Thyroid gland (tissue), 4 donors: ENCODE measurements at regions of chr6 and their contacts with region 1.

Region 1: GRCh38 chr6:10429638-10430427 is 15.0 kb upstream of the TFAP2A start:
- DNase-seq: no peak
- H3K4me3 ChIP-seq: no peak overlapping the region
- H3K27ac ChIP-seq: no peak overlapping the region
- H3K4me1 ChIP-seq: peaks cover 11 to 16% of the 10 kb centered on the region in 2 donors
- H3K27me3 ChIP-seq: peaks cover 7% of the 10 kb centered on the region
- CTCF ChIP-seq: peak in 3 of 6 experiments; percentile 26 to 55 (median 49)
- POLR2A ChIP-seq: no peak

Region 2: GRCh38 chr6:9554806-9555205 is 875.0 kb before region 1 on chr6:
- intact Hi-C with region 1: loop called (anchors 10 kb)
- DNase-seq: no peak
- H3K4me3 ChIP-seq: no peak overlapping the region
- H3K27ac ChIP-seq: no peak overlapping the region
- H3K4me1 ChIP-seq: no peaks in the 10 kb centered on the region
- H3K27me3 ChIP-seq: no peaks in the 10 kb centered on the region
- CTCF ChIP-seq: no peak
- POLR2A ChIP-seq: no peak

Region 3: GRCh38 chr6:10030942-10031537 is 398.8 kb before region 1 on chr6:
- intact Hi-C with region 1: loop called (anchors 10 kb)
- DNase-seq: no peak
- H3K4me3 ChIP-seq: no peak overlapping the region
- H3K27ac ChIP-seq: no peak overlapping the region
- H3K4me1 ChIP-seq: peaks cover 4 to 10% of the 10 kb centered on the region in 2 donors
- H3K27me3 ChIP-seq: no peaks in the 10 kb centered on the region
- CTCF ChIP-seq: peak in 5 of 6 experiments; percentile 33 to 49 (median 37)
- POLR2A ChIP-seq: no peak

Region 4: GRCh38 chr6:10643201-10643651 is 213.4 kb after region 1 on chr6:
- intact Hi-C with region 1: no loop called
- DNase-seq: no peak
- H3K4me3 ChIP-seq: no peak overlapping the region
- H3K27ac ChIP-seq: no peak overlapping the region
- H3K4me1 ChIP-seq: no peaks in the 10 kb centered on the region
- H3K27me3 ChIP-seq: no peaks in the 10 kb centered on the region
- CTCF ChIP-seq: no peak
- POLR2A ChIP-seq: no peak